ENCODE measurements at regions of chr2 and their contacts with region 1.

Region 1: GRCh38 chr2:227655454-227655853 is 11.2 kb upstream of the SCYGR5 start:
- DNase-seq: peak; percentile 12 to 81
- H3K4me3 ChIP-seq: no peak overlapping the region
- H3K27ac ChIP-seq: no peak overlapping the region
- H3K4me1 ChIP-seq: peaks cover 15% of the 10 kb centered on the region
- H3K27me3 ChIP-seq: no peaks in the 10 kb centered on the region
- CTCF ChIP-seq: no peak

Region 2: DNA sequence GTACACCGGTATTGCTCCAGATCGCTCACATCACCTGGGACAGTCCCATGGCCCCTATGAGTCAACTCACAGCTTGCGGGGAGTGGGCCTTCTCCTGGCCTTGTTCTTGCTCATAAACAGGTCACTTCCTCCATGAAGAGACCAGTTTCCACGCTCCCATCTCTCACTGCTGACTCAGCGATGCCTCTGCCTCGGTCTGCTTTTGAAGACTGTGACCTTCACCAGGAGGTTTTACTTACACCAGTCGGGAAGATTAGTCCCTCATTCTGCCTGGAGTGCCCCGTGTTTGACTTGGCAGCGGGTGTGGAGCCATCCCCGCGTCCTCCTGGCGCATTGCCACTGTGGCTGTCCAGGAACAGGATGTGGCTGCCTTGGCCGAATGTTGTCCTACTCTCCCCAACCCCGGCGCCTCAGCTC is 659.8 kb before region 1 on chr2:
- CTCF ChIA-PET with region 1: no interaction called
- POLR2A ChIA-PET with region 1: no interaction called
- intact Hi-C with region 1: no loop called
- DNase-seq: no peak
- H3K4me3 ChIP-seq: no peak overlapping the region
- H3K27ac ChIP-seq: no peak overlapping the region
- H3K4me1 ChIP-seq: no peaks in the 10 kb centered on the region
- H3K27me3 ChIP-seq: no peaks in the 10 kb centered on the region
- CTCF ChIP-seq: no peak

Region 3: DNA sequence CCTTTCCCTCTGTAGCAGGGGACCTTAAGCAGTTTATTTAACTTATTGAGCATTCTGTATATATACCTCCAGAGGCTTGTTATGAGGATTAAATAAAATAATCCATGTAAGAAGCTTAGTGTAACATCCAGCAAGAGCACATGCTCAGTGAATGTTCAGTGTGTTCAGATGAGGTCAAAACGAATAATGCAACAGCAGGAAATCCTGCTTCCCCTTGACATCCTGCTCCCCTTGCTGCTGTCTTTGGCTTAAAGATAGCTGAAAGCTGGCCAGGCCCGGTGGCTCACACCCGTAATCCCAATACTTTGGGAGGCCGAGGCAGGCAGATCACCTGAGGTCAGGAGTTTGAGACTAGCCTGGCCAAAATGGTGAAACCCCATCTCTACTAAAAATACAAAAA is 560.1 kb before region 1 on chr2:
- CTCF ChIA-PET with region 1: no interaction called
- POLR2A ChIA-PET with region 1: no interaction called
- intact Hi-C with region 1: no loop called
- DNase-seq: no peak
- H3K4me3 ChIP-seq: no peak overlapping the region
- H3K27ac ChIP-seq: no peak overlapping the region
- H3K4me1 ChIP-seq: no peaks in the 10 kb centered on the region
- H3K27me3 ChIP-seq: no peaks in the 10 kb centered on the region
- CTCF ChIP-seq: no peak

Region 4: DNA sequence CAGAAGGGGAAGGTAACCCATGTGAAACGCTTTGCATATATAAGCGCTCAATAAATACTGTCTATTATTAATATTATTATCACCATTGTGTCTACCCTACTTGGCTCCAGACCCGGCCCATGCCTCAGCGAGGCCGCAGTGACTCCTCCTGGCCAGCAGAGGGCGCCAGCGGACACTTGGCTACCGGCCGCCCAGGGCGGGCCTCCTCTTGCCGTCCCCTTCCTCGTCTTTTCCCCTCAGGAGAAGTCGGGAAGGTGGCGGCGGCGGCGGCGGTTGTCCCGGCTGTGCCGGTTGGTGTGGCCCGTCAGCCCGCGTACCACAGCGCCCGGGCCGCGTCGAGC is 183.6 kb before region 1 on chr2 and contains the start of gene AGFG1:
- CTCF ChIA-PET with region 1: no interaction called
- POLR2A ChIA-PET with region 1: no interaction called
- intact Hi-C with region 1: loop called (anchors 5 kb)
- DNase-seq: peak; percentile 63 to 87
- H3K4me3 ChIP-seq: peak within 1 kb of the TSS; percentile 96
- H3K27ac ChIP-seq: peak within 1 kb of the TSS; percentile 74
- H3K4me1 ChIP-seq: peaks cover 60% of the 10 kb centered on the region
- H3K27me3 ChIP-seq: no peaks in the 10 kb centered on the region
- CTCF ChIP-seq: peak; percentile 96
- total RNA-seq, gene AGFG1: 82.8 and 119 TPM in 2 replicates

Region 5: GRCh38 chr2:227534714-227535113 is 120.7 kb before region 1 on chr2:
- CTCF ChIA-PET with region 1: no interaction called
- POLR2A ChIA-PET with region 1: no interaction called
- intact Hi-C with region 1: no loop called
- DNase-seq: no peak
- H3K4me3 ChIP-seq: no peak overlapping the region
- H3K27ac ChIP-seq: no peak overlapping the region
- H3K4me1 ChIP-seq: no peaks in the 10 kb centered on the region
- H3K27me3 ChIP-seq: no peaks in the 10 kb centered on the region
- CTCF ChIP-seq: no peak

Region 6: GRCh38 chr2:227766373-227766883 is 111.0 kb after region 1 on chr2:
- CTCF ChIA-PET with region 1: interaction called, 17 read pairs
- POLR2A ChIA-PET with region 1: no interaction called
- intact Hi-C with region 1: loop called (anchors 1 kb)
- DNase-seq: peak; percentile 57 to 79
- H3K4me3 ChIP-seq: no peak overlapping the region
- H3K27ac ChIP-seq: no peak overlapping the region
- H3K4me1 ChIP-seq: peaks cover 12% of the 10 kb centered on the region
- H3K27me3 ChIP-seq: no peaks in the 10 kb centered on the region
- CTCF ChIP-seq: peak; percentile 93

Region 7: DNA sequence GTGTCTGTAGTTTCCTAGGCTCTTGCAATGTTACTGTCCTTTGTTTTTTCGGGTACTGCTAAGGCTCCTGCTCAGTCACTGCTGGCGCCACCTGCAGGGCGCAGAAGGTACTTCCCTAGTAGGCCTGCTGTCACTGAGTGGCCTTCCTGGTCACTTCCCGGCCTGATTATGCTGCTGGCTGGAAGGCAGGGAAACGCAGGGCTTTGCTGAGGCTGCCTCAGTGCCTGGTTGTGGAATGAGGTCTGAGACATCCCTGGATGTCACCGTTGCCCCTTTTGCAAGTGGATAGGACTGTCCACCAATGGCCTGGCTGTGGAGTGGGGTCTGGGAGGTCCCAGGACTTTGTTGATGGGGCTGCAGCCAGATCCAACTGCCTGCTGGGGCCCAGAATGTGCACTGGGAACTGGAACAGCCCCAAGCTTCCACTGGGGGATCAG is 229.1 kb after region 1 on chr2:
- CTCF ChIA-PET with region 1: no interaction called
- POLR2A ChIA-PET with region 1: no interaction called
- intact Hi-C with region 1: loop called (anchors 5 kb)
- DNase-seq: peak; percentile 42 to 57
- H3K4me3 ChIP-seq: no peak overlapping the region
- H3K27ac ChIP-seq: no peak overlapping the region
- H3K4me1 ChIP-seq: no peaks in the 10 kb centered on the region
- H3K27me3 ChIP-seq: no peaks in the 10 kb centered on the region
- CTCF ChIP-seq: peak; percentile 73

Measured in PC-9 (cell line).